Astrocyte of the cerebellum (primary cell): ENCODE measurements at regions of chr3 and their contacts with region 1.

Region 1: GRCh38 chr3:11568503-11569155 is 75.1 kb downstream of the VGLL4 start:
- DNase-seq: peak; percentile 84
- H3K4me3 ChIP-seq: peak overlapping the region; percentile 26
- CTCF ChIP-seq: peak; percentile 1

Region 2: GRCh38 chr3:11379233-11379823 is 189.3 kb before region 1 on chr3:
- in situ Hi-C with region 1: loop called (anchors 25 kb)
- DNase-seq: no peak
- H3K4me3 ChIP-seq: no peak overlapping the region
- CTCF ChIP-seq: peak; percentile 19

Region 3: DNA sequence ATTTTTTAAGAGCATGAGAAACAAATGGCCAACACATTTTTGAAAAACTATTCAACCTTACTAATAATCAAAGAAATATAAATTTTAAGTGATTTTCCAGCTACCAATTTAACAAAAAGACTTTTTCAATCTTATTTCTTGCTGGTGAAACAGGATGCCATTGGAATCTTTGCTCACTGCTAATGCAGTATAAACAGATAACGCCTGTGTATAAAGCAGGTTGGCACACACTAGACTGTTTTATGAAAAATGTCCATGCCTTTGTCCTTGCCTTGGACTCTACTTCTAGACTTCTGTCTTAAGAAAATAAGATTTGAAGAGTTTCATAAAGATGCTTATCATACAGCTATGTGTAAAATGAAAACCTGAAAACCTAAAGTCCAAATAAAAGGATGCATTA is 80.1 kb after region 1 on chr3:
- in situ Hi-C with region 1: loop called (anchors 5 kb)
- DNase-seq: no peak
- H3K4me3 ChIP-seq: no peak overlapping the region
- CTCF ChIP-seq: no peak